CD8-positive, alpha-beta T cell (primary cell): ENCODE measurements at regions of chr6 and their contacts with region 1.

Region 1: GRCh38 chr6:24883618-24884017 is 52.1 kb downstream of the RIPOR2 start:
- DNase-seq: peak in 2 of 9 experiments; percentile 33 to 48
- ATAC-seq: peak; percentile 60
- H3K4me3 ChIP-seq: no peak overlapping the region
- H3K4me3 Mint-ChIP-seq: peak overlapping the region; percentile 67
- H3K27ac ChIP-seq: peak overlapping the region in 1 of 2 experiments; percentile 52
- H3K27ac Mint-ChIP-seq: peak overlapping the region; percentile 94
- H3K4me1 ChIP-seq: peaks cover 84% of the 10 kb centered on the region
- H3K4me1 Mint-ChIP-seq: peaks cover 87% of the 10 kb centered on the region
- H3K27me3 ChIP-seq: no peaks in the 10 kb centered on the region
- H3K27me3 Mint-ChIP-seq: no peaks in the 10 kb centered on the region
- CTCF ChIP-seq: no peak

Region 2: GRCh38 chr6:24867104-24867703 is 16.4 kb before region 1 on chr6:
- CTCF ChIA-PET with region 1: interaction called, 8 read pairs
- POLR2A ChIA-PET with region 1: interaction called, 8 read pairs
- intact Hi-C with region 1: loop called in 1 of 2 experiments (anchors 2 kb)
- DNase-seq: peak in 1 of 9 experiments; percentile 35
- ATAC-seq: no peak
- H3K4me3 ChIP-seq: no peak overlapping the region
- H3K4me3 Mint-ChIP-seq: no peak overlapping the region
- H3K27ac ChIP-seq: peak overlapping the region; percentile 6 to 20
- H3K27ac Mint-ChIP-seq: peak overlapping the region; percentile 90
- H3K4me1 ChIP-seq: peaks cover 68% of the 10 kb centered on the region
- H3K4me1 Mint-ChIP-seq: peaks cover 69% of the 10 kb centered on the region
- H3K27me3 ChIP-seq: no peaks in the 10 kb centered on the region
- H3K27me3 Mint-ChIP-seq: no peaks in the 10 kb centered on the region
- CTCF ChIP-seq: no peak

Region 3: DNA sequence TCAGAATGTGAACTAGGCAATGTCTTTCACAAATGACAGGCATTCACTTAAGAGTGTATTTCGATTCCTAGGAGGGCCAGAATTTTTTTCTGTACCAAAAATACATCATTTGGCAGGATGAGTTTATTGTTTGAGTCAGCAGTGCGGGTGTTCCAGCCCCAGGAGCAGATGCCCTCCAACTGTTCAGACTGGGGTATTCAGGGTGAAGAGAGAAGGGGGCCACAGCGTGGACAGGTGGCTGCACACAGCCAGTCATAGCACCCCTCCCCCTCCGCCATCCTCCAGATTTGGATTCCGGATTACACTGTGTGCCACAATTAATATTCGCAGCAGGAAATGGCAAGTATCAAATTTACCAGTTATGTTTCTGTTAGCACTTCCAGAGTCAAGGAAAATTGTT is 13.6 kb after region 1 on chr6:
- CTCF ChIA-PET with region 1: interaction called, 5 read pairs
- POLR2A ChIA-PET with region 1: interaction called, 24 read pairs
- intact Hi-C with region 1: loop called (anchors 2 kb)
- DNase-seq: no peak
- ATAC-seq: no peak
- H3K4me3 ChIP-seq: no peak overlapping the region
- H3K4me3 Mint-ChIP-seq: no peak overlapping the region
- H3K27ac ChIP-seq: no peak overlapping the region
- H3K27ac Mint-ChIP-seq: peak overlapping the region; percentile 94
- H3K4me1 ChIP-seq: peaks cover 80% of the 10 kb centered on the region
- H3K4me1 Mint-ChIP-seq: peaks cover 89% of the 10 kb centered on the region
- H3K27me3 ChIP-seq: no peaks in the 10 kb centered on the region
- H3K27me3 Mint-ChIP-seq: no peaks in the 10 kb centered on the region
- CTCF ChIP-seq: no peak

Region 4: GRCh38 chr6:24902782-24903181 is 19.2 kb after region 1 on chr6:
- CTCF ChIA-PET with region 1: interaction called, 5 read pairs
- POLR2A ChIA-PET with region 1: interaction called, 24 read pairs
- intact Hi-C with region 1: loop called (anchors 2 kb)
- DNase-seq: no peak
- ATAC-seq: no peak
- H3K4me3 ChIP-seq: no peak overlapping the region
- H3K4me3 Mint-ChIP-seq: peak overlapping the region; percentile 44
- H3K27ac ChIP-seq: peak overlapping the region; percentile 12 to 63
- H3K27ac Mint-ChIP-seq: peak overlapping the region; percentile 94
- H3K4me1 ChIP-seq: peaks cover 97% of the 10 kb centered on the region
- H3K4me1 Mint-ChIP-seq: peaks cover 94% of the 10 kb centered on the region
- H3K27me3 ChIP-seq: no peaks in the 10 kb centered on the region
- H3K27me3 Mint-ChIP-seq: no peaks in the 10 kb centered on the region
- CTCF ChIP-seq: no peak